Activated CD4-positive, alpha-beta T cell treated with anti-CD3 and anti-CD28 coated beads for 36 hours (primary cell): ENCODE measurements at regions of chr13 and their contacts with region 1.

Region 1: GRCh38 chr13:97141564-97142005 is 80.5 kb upstream of the MBNL2 start:
- DNase-seq: peak; percentile 55
- ATAC-seq: peak; percentile 99
- H3K4me3 Mint-ChIP-seq: no peak overlapping the region
- H3K27ac Mint-ChIP-seq: no peak overlapping the region
- H3K4me1 Mint-ChIP-seq: peaks cover 16% of the 10 kb centered on the region
- H3K27me3 Mint-ChIP-seq: peaks cover 26% of the 10 kb centered on the region

Region 2: DNA sequence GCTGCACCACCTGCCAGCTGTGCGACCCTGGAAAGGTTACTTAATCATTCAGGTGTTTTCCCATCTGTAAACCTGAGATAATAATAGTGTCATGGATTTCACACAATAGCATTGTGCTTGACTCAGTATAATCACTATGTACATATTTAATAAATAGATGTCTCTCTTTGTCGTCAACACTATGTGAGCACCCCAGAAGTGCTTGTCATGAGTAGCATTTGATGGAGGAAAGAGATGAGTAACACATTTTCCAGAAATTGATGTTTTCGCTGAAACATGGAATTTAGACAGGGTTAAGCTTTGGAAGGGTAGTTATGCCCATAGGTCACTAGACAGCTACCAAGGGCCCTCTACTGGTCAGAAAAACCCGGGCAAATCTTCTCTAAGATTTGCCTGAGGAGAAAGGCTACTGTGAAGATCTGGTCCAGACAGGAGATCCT is 71.0 kb after region 1 on chr13:
- CTCF ChIA-PET with region 1: no interaction called
- POLR2A ChIA-PET with region 1: no interaction called
- intact Hi-C with region 1: loop called in 1 of 2 experiments (anchors 5 kb)
- DNase-seq: no peak
- ATAC-seq: peak; percentile 30
- H3K4me3 Mint-ChIP-seq: no peak overlapping the region
- H3K27ac Mint-ChIP-seq: no peak overlapping the region
- H3K4me1 Mint-ChIP-seq: peaks cover 48% of the 10 kb centered on the region
- H3K27me3 Mint-ChIP-seq: no peaks in the 10 kb centered on the region